Spleen (tissue), 13 donors: ENCODE measurements at regions of chr7 and their contacts with region 1.

Region 1: DNA sequence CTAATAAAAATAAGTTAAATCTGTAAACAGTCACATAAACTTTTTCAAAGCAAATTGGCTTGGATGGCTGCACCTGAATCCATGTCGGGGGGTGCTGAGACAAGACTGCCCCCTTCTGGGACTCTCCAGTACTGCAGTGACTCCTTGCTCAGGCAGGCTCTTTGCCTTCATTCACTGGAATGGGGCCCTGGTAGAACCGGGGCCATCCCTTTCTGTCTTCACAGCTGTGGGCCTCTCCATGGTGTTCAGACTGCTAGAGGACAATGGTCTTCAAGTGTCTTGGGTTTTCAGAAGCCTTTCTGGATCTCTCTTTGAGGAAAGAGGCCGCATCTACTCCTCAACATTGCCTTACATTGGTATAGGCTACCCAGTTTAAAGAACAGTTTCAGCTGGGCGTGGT is 16.1 kb upstream of the IMPDH1 start:
- DNase-seq: peak; percentile 86
- H3K4me3 ChIP-seq: no peak overlapping the region
- H3K27ac ChIP-seq: no peak overlapping the region
- H3K4me1 ChIP-seq: peaks cover 0 to 13% (median 3%) of the 10 kb centered on the region in 6 donors
- H3K27me3 ChIP-seq: peaks cover 0 to 13% (median 0%) of the 10 kb centered on the region in 7 donors
- CTCF ChIP-seq: peak; percentile 78 to 98 (median 91)
- POLR2A ChIP-seq: no peak

Region 2: DNA sequence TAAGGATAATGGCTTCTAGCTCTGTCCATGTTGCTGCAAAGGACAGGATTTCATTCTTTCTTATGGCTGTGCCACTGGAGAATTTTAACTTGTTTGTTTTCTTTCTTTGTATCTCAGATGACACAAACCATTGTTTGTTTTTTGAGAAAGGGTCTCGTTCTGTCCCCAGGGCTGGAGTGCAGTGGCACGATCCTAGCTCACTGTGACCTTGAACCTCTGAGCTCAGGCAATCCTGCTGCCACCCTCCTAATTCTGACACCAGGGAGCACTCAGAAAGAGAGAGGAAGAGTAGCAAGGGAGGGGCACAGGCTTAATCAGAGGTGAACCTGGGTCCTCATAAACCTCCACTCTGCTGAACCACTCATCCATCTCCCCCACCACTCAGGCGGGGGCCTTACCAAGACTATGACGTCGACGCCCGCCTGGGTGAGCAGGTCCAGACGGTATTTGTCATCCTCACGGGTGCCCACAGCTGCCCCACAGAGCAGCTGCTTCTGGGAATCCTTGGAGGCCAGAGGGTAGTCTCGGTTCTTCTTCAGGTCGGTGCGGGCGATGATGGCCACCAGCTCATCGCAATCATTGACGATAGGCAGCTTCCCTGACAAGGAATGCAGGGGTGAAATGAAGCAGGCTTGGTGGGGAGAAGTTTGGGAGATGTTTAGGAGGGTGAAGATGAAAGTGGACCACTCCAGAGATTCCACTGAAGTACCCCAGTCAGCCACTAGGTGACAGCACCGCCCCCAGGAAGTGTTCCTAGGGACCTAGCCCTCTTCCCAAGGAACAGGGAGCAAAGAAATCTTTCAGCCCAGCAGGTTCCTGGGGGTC is 27.6 kb before region 1 on chr7:
- intact Hi-C with region 1: loop called (anchors 2 kb)
- DNase-seq: no peak
- H3K4me3 ChIP-seq: no peak overlapping the region
- H3K27ac ChIP-seq: no peak overlapping the region
- H3K4me1 ChIP-seq: peaks cover 0 to 2% (median 0%) of the 10 kb centered on the region in 6 donors
- H3K27me3 ChIP-seq: no peaks in the 10 kb centered on the region
- CTCF ChIP-seq: peak; percentile 59 to 91 (median 86)
- POLR2A ChIP-seq: no peak

Region 3: DNA sequence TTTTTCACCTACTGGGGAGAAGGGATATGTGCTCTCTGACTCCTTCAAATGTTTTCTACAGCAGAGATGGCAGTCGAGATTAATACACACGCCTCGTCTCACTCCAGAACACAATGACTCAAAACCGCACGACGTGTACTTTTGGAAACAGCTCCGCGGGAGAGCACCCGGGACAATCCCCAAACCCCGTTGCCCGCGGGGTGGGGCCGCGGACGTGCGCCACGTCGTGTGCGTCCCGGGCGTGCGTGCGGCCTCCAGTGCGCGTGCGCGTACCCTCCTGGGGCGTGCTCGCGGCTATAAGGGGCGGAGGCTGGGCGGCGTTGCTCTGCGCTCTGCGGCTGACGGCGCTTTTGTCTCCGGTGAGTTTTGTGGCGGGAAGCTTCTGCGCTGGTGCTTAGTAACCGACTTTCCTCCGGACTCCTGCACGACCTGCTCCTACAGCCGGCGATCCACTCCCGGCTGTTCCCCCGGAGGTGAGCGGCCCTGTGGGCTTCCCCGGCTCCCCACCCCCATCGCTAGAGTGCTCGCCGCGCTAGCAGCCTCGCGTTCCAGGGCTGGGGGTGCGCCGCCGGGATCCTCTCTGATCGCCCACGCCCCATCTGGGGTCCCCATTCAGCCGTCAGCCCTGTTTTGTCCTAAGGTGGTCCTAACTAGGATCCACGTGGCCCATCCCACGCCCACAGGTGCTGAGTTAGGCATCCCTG is 29.9 kb after region 1 on chr7 and contains the start of gene HILPDA:
- intact Hi-C with region 1: loop called (anchors 2 kb)
- DNase-seq: peak; percentile 98
- H3K4me3 ChIP-seq: peak within 1 kb of the TSS; percentile 67 to 92 (median 78)
- H3K27ac ChIP-seq: peak within 1 kb of the TSS; percentile 55 to 93 (median 88)
- H3K4me1 ChIP-seq: peaks cover 7 to 61% (median 44%) of the 10 kb centered on the region in 6 donors
- H3K27me3 ChIP-seq: no peaks in the 10 kb centered on the region
- CTCF ChIP-seq: peak in 1 of 11 experiments; percentile 24
- POLR2A ChIP-seq: peak in 1 of 3 donors; percentile 70
- total RNA-seq, gene HILPDA: 4.2 to 16.7 (median 7.1) TPM